OCI-LY7 (cell line): ENCODE measurements at regions of chr7 and their contacts with region 1.

Region 1: DNA sequence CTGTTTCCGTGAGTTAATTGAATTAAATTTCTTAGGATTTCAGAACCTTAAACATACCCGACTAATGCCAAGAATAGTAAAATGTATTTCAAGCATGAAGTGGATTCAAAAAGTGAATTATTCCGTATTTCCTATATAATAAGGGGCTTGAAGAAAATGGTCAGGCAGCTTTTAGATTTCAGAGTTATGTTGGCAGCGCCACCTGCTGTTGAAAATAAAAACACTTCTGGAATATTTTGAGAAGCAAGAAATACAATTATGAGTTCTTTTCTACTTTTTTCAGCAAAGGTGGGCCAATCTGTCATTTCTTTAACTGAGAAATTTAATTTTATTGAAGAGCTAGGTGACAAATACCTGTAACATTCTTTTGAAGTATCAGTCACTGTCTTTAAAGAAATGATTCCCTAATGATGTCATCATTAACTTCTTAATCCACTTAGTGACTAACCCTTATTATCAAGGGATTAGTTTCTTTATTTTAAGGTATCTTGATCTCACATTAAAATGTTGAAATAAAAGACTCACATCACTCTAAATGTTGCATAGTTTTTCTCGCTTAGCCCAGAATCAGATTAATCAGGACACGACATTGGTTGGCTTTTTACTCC is 36.6 kb upstream of the AGR3 start:
- DNase-seq: peak; percentile 36
- H3K4me3 ChIP-seq: no peak overlapping the region
- H3K27ac ChIP-seq: no peak overlapping the region
- H3K4me1 ChIP-seq: no peaks in the 10 kb centered on the region
- CTCF ChIP-seq: peak; percentile 96

Region 2: DNA sequence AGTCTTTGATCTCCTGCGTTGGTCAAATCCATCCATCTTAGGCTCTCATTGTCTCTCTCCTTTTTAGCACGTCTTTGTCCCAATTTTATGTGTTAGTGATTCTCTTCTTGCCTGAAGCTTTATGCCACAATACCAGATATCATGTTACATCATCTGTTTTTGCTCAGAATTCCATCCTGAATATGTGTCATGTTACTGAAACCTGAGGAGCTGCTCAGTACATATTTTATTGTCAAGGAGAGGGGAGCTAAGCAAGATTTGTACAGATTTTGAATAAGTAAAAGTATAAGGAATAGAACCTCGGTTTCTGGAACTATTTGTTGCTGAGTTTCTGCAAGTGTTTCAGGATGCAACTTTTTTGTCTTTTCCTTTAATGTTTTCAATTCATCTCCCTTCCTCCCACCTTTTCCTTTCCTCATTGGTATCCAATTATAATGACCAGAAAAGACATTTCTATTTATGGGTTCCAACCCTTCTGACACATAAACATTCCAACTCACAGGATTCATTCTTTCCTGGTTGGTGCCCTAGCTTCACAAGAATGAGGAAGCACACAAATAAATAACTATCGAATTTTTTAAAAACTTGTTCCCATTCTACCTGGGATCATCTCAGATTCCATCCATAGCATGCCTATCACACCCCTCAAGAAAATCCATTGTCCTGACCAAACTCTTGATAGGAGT is 788.8 kb before region 1 on chr7:
- CTCF ChIA-PET with region 1: no interaction called
- POLR2A ChIA-PET with region 1: interaction called, 10 read pairs
- intact Hi-C with region 1: no loop called
- DNase-seq: no peak
- H3K4me3 ChIP-seq: no peak overlapping the region
- H3K27ac ChIP-seq: no peak overlapping the region
- H3K4me1 ChIP-seq: no peaks in the 10 kb centered on the region
- CTCF ChIP-seq: no peak

Region 3: DNA sequence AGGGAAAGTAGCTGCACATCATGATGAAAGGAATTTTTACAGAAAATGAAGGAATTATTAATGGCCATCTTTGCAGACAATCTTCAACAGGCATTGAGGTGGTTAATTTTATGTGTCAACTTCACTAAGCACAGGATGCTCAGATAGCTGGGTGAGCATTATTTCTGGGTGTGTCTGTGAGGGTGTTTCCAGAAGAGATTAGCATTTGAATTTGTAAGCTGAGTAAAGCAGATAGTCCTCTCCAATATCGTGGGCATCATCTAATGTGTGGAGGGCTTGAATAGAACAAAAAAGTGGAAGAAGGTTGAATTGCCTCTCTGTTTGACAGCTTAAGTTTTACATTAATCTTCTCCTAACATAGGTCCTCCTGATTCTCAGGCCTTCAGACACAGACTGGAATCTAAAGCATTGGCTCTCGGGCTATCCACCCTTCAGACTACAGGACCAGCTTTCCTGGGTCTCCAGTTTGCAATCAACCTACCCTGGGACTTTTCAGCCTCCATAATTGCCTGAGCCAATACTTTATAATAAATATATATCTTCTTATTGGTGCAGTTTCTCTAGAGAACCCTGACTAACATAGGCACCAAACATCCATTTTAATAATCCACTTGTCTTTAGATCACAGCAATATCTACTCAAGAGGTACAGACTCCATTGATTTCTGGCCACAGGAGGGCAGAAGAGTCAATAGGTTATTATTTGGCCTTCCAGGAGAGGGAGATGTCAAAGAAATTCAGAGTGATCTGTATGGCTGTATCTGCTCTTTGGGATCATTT is 486.6 kb before region 1 on chr7:
- CTCF ChIA-PET with region 1: no interaction called
- POLR2A ChIA-PET with region 1: no interaction called
- intact Hi-C with region 1: loop called (anchors 10 kb)
- DNase-seq: peak; percentile 27
- H3K4me3 ChIP-seq: no peak overlapping the region
- H3K27ac ChIP-seq: no peak overlapping the region
- H3K4me1 ChIP-seq: no peaks in the 10 kb centered on the region
- CTCF ChIP-seq: peak; percentile 69

Region 4: DNA sequence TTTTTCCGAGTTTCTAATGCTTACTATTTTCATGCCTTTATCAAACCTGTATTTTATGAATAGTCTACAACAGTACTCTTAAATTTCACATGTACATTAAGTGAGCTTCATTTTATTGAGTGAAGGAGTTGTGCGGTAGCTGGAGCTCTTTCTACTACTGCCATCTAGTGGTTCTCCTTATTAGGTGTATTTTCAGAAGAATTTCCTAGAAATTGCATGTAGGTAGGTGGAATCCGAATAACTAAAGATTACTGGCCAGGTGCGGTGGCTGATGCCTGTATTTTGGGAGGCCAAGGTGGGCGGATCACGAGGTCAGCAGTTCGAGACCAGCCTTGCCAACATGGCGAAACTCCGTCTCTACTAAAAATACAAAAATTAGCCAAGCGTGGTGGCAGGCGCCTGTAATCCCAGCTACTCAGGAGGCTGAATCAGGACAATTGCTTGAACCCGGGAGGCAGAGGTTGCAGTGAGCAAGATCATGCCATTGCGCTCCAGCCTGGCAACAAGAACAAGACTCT is 353.4 kb before region 1 on chr7:
- CTCF ChIA-PET with region 1: no interaction called
- POLR2A ChIA-PET with region 1: no interaction called
- intact Hi-C with region 1: loop called (anchors 10 kb)
- DNase-seq: peak; percentile 52
- H3K4me3 ChIP-seq: no peak overlapping the region
- H3K27ac ChIP-seq: no peak overlapping the region
- H3K4me1 ChIP-seq: no peaks in the 10 kb centered on the region
- CTCF ChIP-seq: peak; percentile 87

Region 5: DNA sequence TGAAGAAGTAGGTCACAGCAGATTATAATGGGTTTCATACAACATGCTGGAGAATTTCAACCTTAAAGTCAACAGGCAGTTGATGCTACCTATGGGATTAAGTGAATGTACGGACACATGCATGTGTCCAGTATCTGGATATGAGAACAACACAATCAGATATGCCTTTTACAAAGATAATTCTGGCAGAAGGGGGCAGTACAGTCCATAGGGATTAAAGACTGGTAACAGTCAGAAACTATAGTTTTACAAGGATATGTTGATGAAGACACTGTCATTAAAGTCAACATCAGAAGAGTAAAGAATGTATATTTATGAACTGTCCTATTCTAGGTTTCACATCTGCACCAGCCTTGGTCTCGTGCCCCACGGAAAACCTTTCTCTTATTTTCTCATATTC is 314.3 kb before region 1 on chr7:
- CTCF ChIA-PET with region 1: no interaction called
- POLR2A ChIA-PET with region 1: no interaction called
- intact Hi-C with region 1: loop called (anchors 5 kb)
- DNase-seq: no peak
- H3K4me3 ChIP-seq: no peak overlapping the region
- H3K27ac ChIP-seq: no peak overlapping the region
- H3K4me1 ChIP-seq: no peaks in the 10 kb centered on the region
- CTCF ChIP-seq: peak; percentile 53

Region 6: DNA sequence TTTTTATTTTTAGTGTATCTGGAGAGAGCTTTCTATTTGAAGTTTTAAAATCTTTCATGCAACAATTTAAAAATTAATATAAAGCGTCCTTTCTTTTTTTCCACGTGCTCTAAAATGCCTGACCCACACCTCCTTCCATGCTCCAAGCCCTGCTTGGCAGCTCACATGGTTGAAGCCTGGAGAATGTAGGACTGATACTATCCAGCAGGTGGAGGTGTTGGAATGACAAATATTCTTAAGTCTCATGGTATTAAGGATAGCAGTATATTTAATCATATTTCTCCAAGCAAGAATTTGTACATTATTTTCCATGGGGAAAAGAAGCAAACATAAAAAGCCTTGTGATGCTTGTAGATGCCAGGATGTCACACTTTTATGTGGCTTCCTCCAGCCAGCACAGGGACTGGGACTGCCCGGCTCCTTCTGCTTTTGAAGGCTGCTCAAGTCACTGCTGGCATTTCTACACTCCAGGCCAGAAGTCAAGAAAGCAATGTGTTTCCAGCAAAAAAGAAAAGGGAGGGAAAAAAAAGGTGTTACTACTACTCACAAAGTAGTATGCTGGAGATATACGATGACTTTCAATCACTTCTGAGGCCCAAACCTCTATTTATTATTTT is 222.7 kb before region 1 on chr7:
- CTCF ChIA-PET with region 1: no interaction called
- POLR2A ChIA-PET with region 1: no interaction called
- intact Hi-C with region 1: loop called (anchors 10 kb)
- DNase-seq: peak; percentile 19
- H3K4me3 ChIP-seq: no peak overlapping the region
- H3K27ac ChIP-seq: no peak overlapping the region
- H3K4me1 ChIP-seq: no peaks in the 10 kb centered on the region
- CTCF ChIP-seq: peak; percentile 69

Region 7: GRCh38 chr7:16774986-16775385 is 143.4 kb before region 1 on chr7:
- CTCF ChIA-PET with region 1: no interaction called
- POLR2A ChIA-PET with region 1: no interaction called
- intact Hi-C with region 1: no loop called
- DNase-seq: no peak
- H3K4me3 ChIP-seq: no peak overlapping the region
- H3K27ac ChIP-seq: no peak overlapping the region
- H3K4me1 ChIP-seq: peaks cover 12% of the 10 kb centered on the region
- CTCF ChIP-seq: no peak

Region 8: DNA sequence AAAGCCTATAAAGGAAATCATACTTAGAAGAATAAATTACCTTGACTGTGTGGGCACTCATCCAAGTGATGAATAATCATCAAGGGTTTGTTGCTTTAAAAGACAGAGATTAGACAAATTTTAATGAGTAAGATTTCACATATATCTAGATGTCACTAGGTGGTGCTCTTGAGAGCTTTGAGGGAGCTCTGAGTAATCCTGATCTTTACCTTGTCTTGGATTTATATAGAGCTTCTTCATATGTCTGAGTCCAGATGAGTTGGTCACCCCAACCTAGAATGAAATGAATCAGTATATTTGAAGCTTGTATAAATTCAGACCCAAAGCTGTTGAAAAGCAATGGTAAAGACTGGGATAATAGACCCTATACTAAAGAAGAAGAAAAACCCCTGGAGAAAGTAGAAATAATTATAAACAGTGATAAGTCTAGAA is 117.3 kb before region 1 on chr7:
- CTCF ChIA-PET with region 1: no interaction called
- POLR2A ChIA-PET with region 1: no interaction called
- intact Hi-C with region 1: loop called (anchors 5 kb)
- DNase-seq: peak; percentile 43
- H3K4me3 ChIP-seq: no peak overlapping the region
- H3K27ac ChIP-seq: no peak overlapping the region
- H3K4me1 ChIP-seq: no peaks in the 10 kb centered on the region
- CTCF ChIP-seq: peak; percentile 81